Right ventricle myocardium superior (tissue), 1 donor: ENCODE measurements at regions of chr9 and their contacts with region 1.

Region 1: DNA sequence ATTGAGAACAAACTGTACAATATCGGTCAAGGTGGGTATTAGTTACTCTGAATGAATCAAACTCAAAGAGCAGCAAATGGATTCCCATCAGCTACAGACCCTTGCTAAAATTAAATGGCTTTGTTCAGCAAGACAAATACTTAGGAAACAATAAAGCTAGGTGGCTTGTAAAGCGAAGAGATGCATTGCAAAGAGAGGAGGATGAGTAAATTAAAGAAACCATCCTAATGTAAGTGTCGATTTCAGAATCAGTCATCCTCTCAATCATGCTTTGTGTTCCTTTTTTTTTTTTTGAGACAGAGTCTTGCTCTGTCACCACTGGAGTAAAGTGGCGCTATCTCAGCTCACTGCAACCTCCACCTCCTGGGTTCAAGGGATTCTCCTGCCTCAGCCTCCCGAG is 359.2 kb upstream of the ZNF462 start:
- DNase-seq: no peak
- ATAC-seq: no peak

Region 2: DNA sequence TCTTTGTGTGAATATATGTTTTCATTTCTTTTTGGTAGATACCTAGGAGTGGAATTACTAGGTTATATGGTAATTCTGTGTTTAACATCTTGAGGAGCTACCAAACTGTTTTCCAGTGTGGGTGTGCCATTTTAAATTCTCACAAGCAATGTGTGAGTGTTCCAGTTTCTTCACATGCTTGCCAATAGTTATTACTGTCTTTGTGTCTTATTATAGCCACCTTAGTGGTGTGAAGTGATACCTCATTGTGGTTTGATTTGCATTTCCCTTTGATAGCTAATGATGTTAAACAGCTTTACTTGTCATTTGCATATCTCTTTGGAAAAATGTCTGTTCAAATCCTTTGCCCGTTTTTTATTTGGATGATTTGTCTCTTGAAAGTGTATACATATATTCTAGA is 296.5 kb before region 1 on chr9:
- intact Hi-C with region 1: loop called (anchors 5 kb)
- DNase-seq: no peak
- ATAC-seq: no peak

Region 3: DNA sequence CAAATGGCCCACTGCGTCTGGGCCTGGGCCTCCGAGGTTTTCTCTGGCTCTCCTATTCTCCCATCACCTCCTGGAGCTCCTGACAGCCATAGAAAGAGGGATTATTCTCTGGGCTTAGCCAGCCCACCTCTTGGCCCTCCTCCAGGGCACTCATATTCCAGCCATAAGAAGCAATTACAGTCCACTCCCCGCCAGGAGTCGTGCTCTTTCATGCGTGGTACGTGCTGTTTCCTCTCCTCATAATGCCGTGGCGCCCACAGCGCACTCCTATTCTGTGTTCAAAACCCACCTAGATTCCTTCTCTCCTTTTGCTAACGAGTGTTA is 118.4 kb after region 1 on chr9:
- intact Hi-C with region 1: no loop called
- DNase-seq: no peak
- ATAC-seq: no peak